ENCODE measurements at regions of chr13 and their contacts with region 1.

Region 1: DNA sequence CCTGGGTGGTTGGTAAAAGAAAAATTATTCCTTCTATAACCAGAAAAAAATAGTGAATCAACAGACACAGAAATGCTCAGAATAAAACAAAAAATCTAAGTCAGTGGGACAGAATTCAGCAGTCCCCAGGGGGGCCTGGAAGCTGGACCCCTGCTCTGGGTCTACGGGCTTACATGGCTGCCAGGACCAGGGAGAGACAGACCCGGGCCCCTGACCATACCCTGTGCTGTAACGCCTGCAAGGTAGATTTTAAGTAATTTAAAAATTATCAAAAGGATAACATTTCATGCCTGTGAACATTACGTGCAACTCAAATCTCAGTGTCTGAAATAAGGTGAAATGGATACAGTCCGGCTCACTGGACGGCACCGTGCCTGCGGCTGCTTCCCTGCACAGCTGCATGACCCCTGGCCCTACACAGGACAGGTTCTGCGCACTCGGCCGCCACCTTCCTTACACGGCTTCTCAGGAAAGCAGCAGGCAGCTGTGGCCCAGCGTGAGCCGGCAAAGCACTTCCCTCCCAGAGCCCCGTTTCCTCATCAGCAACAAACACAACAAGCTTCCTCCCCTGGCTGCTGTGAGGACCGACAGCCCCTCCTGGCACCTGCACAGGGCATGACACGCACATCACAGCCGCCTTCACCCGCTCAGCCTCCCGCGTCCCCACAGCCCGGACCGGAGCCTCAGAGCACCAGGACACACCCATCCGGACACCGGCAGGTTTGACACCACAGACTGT is 22.2 kb downstream of the RASA3 start:
- DNase-seq: peak; percentile 70
- H3K4me3 Mint-ChIP-seq: peak overlapping the region; percentile 83
- H3K27ac Mint-ChIP-seq: peak overlapping the region; percentile 95
- H3K4me1 Mint-ChIP-seq: peaks cover 62% of the 10 kb centered on the region
- H3K27me3 Mint-ChIP-seq: no peaks in the 10 kb centered on the region

Region 2: DNA sequence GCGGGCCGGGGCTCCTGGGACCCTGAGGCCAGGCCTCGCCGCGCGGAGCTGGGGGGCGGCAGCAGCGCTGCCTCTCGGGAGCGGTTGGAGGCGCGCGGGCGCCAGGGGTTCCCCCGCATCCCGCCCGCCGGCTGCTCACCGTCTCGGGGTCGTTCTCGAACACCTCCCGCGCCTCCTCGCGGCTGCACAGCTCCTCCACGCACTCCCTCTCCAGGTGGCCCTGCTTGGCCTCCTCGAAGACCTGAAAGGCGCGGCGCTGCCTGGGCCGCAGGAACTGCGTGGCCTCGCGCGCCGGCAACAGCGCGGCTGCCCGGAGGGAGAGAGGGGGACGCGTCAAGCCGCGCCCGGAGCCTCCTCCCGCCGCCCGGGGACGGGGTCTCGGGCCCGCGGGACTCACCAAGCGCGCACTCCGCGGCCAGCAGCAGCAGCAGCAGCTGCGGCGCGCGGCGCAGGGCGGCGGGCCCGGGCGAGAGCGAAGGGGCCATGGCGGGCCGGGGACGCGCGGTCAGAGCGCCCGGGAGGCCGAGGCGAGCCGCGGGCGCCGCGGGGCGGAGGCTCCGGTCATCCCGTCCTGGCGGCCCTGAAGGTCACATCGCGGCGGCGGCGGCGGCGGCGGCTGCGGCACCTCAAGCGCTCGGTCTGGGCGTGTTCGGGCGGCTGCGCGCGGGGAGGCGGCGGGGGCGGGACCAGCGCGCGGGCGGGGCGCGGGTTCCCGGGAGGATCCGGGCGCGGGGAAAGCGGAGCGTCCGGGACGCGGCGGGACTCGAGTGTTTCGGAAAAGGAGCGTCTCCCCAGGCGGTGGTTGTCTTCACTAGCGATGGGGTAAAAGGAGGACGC is 246.6 kb before region 1 on chr13 and contains the start of gene GAS6:
- intact Hi-C with region 1: no loop called
- DNase-seq: no peak
- H3K4me3 Mint-ChIP-seq: peak within 1 kb of the TSS; percentile 67
- H3K27ac Mint-ChIP-seq: no peak within 1 kb of the TSS
- H3K4me1 Mint-ChIP-seq: peaks cover 5% of the 10 kb centered on the region
- H3K27me3 Mint-ChIP-seq: peaks cover 38% of the 10 kb centered on the region
- total RNA-seq, gene GAS6: 0.62 and 0.98 TPM in 2 replicates

Region 3: DNA sequence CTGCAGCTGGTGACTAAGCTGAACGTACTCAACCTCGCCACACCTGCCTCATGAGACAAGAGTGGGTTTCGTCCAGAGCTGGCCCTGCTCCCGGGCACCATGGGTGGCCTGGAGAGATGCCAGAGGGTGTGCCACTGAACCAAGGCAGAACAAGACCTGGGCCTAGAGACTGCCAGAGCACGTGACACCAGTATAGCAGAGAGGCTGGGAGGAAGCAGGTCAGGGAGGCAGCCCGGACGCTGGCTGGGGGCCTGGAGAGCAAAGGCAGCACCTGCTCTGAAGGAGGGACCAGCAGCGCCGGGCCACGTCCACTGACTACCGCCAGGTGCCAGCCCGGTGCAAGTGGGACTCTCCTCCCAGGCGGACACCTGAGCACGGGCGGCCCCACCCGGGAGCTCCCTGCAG is 129.1 kb before region 1 on chr13:
- intact Hi-C with region 1: no loop called
- DNase-seq: no peak
- H3K4me3 Mint-ChIP-seq: no peak overlapping the region
- H3K27ac Mint-ChIP-seq: no peak overlapping the region
- H3K4me1 Mint-ChIP-seq: no peaks in the 10 kb centered on the region
- H3K27me3 Mint-ChIP-seq: no peaks in the 10 kb centered on the region

Region 4: GRCh38 chr13:114047358-114047881 is 62.8 kb before region 1 on chr13:
- intact Hi-C with region 1: loop called (anchors 1 kb)
- DNase-seq: no peak
- H3K4me3 Mint-ChIP-seq: no peak overlapping the region
- H3K27ac Mint-ChIP-seq: no peak overlapping the region
- H3K4me1 Mint-ChIP-seq: peaks cover 51% of the 10 kb centered on the region
- H3K27me3 Mint-ChIP-seq: no peaks in the 10 kb centered on the region

Region 5: GRCh38 chr13:114090476-114090875 is 19.8 kb before region 1 on chr13:
- intact Hi-C with region 1: no loop called
- DNase-seq: no peak
- H3K4me3 Mint-ChIP-seq: no peak overlapping the region
- H3K27ac Mint-ChIP-seq: no peak overlapping the region
- H3K4me1 Mint-ChIP-seq: peaks cover 10% of the 10 kb centered on the region
- H3K27me3 Mint-ChIP-seq: no peaks in the 10 kb centered on the region

Region 6: DNA sequence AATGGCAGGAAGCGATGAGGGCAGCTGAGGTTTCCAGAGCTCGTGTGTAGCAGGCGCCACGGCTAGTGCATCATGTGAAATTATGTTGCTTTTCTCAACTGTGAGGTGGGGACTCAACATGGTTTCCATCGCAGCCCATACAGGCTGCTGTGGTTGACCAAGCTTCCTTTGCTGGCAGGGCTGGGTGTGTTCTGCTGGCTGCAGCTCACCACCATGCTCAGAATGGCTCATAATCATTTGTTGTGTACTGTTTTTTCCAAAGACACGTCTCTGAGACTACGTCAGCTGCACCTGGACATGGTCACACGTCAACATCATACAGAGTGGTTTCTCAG is 38.2 kb after region 1 on chr13:
- intact Hi-C with region 1: loop called (anchors 5 kb)
- DNase-seq: peak; percentile 90
- H3K4me3 Mint-ChIP-seq: peak overlapping the region; percentile 69
- H3K27ac Mint-ChIP-seq: peak overlapping the region; percentile 85
- H3K4me1 Mint-ChIP-seq: peaks cover 84% of the 10 kb centered on the region
- H3K27me3 Mint-ChIP-seq: peaks cover 2% of the 10 kb centered on the region

Region 7: GRCh38 chr13:114279758-114280355 is 169.6 kb after region 1 on chr13:
- intact Hi-C with region 1: no loop called
- DNase-seq: no peak
- H3K4me3 Mint-ChIP-seq: peak overlapping the region; percentile 57
- H3K27ac Mint-ChIP-seq: peak overlapping the region; percentile 98
- H3K4me1 Mint-ChIP-seq: peaks cover 42% of the 10 kb centered on the region
- H3K27me3 Mint-ChIP-seq: no peaks in the 10 kb centered on the region

Measured in activated T-helper 1 cell treated with anti-CD3 and anti-CD28 coated beads, Interleukin-12 subunit alpha, Interleukin-12 subunit beta, Interleukin-2, Interleukin-4 antibody, amounts not matched to agents 30 ng/mL and 10 ng/mL and 1 ng/mL, durations not matched to agents 14 hours and 24 hours and 36 hours (primary cell).